AG04449 (cell line): ENCODE measurements at regions of chr18 and their contacts with region 1.

Region 1: DNA sequence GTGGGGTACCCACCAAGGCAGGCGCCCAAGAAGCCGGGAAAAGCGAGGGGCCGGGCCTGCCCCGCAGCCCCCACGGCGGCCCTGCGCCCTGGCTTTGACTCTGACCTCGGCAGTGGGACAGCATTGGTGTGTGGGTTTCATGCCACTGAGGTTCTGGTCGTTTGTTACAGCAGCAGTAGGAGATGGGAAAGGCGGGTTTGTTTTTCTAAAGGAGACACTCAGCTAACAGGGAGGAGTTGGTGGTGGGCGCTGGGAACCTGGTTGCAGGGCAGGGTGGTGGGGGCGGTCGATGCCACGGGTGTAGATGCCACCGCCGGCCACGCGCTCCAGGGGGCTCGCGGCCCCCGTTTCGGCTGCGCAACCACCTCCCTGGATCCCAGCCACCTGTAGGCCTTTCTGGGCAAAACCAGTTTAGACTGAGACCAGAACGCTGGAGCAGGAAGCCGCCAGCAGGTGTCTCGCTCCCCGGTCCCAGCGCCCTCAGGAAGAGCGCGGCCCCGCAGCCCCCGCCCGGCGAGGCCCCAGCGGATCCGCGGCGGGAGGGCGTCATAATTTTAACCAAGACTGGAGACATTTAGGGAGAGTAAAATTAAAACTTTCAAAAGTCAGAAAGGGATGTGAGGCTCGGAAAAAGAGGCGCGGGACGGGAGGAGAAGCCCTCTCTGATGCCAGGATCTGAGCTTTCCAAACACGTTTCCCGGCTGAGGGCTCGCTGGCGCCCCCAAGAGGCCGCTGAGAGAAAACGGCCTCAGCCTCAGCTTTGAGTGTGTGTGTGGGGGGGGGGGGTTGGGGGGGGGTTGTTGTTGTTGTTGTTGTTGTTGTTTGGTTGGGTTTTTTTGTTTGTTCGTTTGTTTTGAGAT is 17.4 kb downstream of the CIDEA start:
- DNase-seq: no peak
- H3K4me3 ChIP-seq: peak overlapping the region; percentile 57
- CTCF ChIP-seq: peak; percentile 82

Region 2: DNA sequence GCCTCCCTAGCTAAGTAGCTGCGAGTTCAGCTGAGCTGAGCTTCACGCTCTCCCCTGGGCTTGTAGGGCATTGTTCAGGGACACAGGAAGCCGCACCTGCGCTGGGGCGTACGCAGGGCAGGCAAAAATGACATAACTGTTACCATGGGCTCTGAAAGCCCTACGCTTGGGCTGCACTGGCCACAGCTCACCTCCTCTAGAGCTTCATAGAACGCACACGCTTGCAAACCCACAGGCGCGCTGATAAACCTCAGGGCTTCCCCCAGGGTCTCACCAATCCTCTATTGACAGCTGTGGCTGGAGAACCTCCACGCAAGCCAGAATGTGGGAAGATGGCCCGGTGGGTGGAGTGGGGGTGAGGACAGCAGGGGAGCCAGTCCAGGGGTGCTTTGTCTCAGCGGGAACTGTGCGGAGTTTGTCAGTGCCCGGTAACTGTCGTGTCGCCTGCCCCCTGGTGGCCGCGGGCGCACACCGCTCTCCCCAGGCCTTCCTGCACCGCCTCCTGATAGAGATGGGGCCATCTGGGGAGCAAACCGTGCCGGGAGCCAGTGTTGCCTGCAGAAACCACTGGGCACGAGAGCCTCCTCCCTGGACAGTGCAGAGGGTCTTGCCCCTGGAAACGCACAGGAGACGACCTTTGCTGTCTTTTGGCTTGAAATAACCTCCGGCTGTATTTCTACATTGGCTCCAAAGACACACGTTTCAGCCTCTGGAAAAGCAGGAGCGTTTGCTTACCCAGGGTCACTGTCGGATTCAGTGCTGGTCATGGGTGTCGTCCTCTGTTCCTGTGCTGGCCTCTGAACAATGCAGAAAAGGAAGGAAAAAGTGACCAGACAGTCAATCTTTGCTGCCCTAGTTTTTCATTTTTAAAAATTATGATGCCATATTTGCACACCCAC is 34.4 kb before region 1 on chr18:
- CTCF ChIA-PET with region 1: interaction called, 12 read pairs
- POLR2A ChIA-PET with region 1: no interaction called
- DNase-seq: no peak
- H3K4me3 ChIP-seq: no peak overlapping the region
- CTCF ChIP-seq: peak; percentile 97

Region 3: GRCh38 chr18:12287684-12288402 is 16.2 kb after region 1 on chr18:
- CTCF ChIA-PET with region 1: interaction called, 32 read pairs
- POLR2A ChIA-PET with region 1: interaction called, 3 read pairs
- DNase-seq: peak; percentile 87
- H3K4me3 ChIP-seq: peak overlapping the region; percentile 60
- CTCF ChIP-seq: peak; percentile 12

Region 4: GRCh38 chr18:12308386-12309100 is 36.9 kb after region 1 on chr18:
- CTCF ChIA-PET with region 1: interaction called, 39 read pairs
- POLR2A ChIA-PET with region 1: interaction called, 7 read pairs
- DNase-seq: no peak
- H3K4me3 ChIP-seq: peak overlapping the region; percentile 93
- CTCF ChIP-seq: no peak

Region 5: DNA sequence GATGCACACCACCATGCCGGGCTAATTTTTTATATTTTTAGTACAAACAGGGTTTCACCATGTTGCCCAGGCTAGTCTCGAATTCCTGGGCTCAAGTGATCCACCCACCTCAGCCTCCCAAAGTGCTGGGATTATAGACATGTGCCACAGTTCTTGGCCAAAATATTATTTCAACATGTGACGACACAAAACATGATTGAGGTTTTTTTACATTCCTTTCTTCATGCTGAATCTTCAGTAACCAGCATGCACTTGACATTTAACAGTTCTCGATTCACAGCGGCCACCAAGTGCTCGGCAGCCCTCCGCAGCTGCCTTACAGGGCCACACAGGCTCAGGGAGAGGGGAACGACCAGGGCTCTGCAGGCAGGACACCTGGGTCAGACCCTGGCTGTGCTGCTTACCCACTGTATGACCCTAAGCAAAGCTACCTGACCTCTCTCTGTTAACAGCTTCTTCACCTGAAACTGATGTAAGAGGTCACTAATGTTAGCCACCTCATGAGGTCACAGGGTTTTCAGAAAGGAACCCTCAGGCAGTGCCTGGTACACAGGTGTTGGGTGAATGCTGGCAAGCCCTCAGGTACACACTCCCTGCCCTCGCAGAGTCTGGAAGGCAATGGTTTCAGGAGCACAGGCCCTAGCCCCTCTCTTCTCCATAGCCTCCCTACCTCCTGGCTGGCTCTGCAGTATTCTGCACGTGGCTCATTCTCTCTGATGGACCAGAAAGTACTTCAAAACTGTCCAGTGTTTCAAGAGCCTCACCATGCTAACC is 62.1 kb after region 1 on chr18:
- CTCF ChIA-PET with region 1: interaction called, 16 read pairs
- POLR2A ChIA-PET with region 1: no interaction called
- DNase-seq: no peak
- H3K4me3 ChIP-seq: no peak overlapping the region
- CTCF ChIP-seq: no peak

Region 6: DNA sequence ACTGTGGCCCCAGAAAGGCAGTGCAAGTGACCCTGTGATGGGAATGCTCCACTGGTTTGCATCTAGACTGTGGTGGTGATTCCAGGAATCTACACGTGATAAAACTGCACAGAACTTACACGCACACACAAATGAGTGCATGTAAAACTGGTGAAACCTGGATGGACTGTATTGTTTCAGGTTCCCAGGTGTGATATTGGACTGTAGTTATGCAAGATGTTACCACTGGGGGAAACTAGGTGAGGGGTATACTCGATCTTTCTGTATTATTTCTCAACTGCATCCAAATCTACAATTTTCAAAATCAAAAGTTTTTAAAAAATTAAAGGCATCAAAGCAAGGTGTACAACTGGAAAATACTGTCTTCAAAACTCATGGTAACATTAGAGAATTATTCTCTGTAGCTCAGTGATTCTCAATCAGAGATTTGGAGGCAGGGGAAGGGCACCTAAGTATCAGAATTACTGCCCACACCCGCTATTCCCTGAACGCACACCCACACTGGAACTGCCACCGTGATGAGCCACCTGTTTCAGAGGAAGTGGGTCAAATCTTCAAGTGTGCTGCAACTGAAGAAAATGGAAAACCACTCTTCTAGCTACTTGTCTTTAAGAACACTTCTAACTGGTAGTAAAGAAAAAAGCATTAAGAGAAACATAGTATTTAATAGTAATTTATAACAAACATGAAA is 585.8 kb after region 1 on chr18:
- CTCF ChIA-PET with region 1: no interaction called
- POLR2A ChIA-PET with region 1: no interaction called
- DNase-seq: no peak
- H3K4me3 ChIP-seq: no peak overlapping the region
- CTCF ChIP-seq: no peak